A549 (cell line): ENCODE measurements at regions of chr19 and their contacts with region 1.

Region 1: GRCh38 chr19:58305065-58305931 is at the start of gene ERVK3-1:
- DNase-seq: peak; percentile 99
- ATAC-seq: peak; percentile 100
- H3K4me3 ChIP-seq: peak within 1 kb of the TSS; percentile 72
- H3K27ac ChIP-seq: peak within 1 kb of the TSS; percentile 77 to 89
- H3K4me1 ChIP-seq: 0 out of 3 replicates have a peak, but pooled peaks cover 4% of the 10 kb centered on the region
- CTCF ChIP-seq: no peak
- EP300 ChIP-seq: no peak
- POLR2A ChIP-seq: peak; percentile 97
- RAD21 ChIP-seq: 0 out of 5 replicates have a peak, but pooled peaks of 1 of the 2 experiments have one; percentile 20
- polyA plus RNA-seq, gene ERVK3-1: 112 and 142 TPM in 2 replicates

Region 2: DNA sequence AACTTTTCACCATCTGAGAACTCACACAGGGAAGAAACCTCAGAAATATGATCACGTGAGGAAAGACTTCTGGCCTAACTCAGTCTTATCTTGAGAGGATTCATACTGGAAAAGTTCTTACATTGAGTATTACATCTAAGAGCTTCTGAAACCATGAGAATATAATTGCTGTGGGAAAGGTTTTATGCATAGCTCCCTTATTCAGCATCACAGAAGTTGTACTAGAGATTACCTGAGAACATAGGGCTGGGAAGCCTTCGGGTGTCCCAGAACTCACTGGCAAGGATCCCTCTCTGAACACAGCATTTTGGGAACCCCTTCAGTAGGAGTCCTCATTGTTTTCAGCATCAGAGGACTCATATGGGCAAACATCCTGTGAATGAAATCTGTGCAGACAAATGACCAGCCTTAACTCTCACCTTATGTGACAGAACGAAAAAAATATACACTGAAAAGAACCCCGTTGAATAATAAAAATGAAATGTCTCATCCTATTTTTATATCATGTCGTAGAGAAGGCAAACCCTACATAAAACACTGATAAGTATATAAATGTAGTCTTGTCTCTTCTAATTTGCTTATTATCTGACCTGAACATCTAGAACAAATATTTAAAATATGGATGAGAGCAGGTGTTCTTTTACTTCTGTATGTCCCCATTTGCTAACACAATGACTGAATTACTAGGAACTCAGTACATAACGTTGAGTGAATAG is 108.2 kb before region 1 on chr19:
- CTCF ChIA-PET with region 1: no interaction called
- POLR2A ChIA-PET with region 1: no interaction called
- DNase-seq: peak in 1 of 2 experiments; percentile 62
- ATAC-seq: no peak
- H3K4me3 ChIP-seq: no peak overlapping the region
- H3K27ac ChIP-seq: no peak overlapping the region
- H3K4me1 ChIP-seq: no peaks in the 10 kb centered on the region
- CTCF ChIP-seq: no peak
- EP300 ChIP-seq: no peak
- POLR2A ChIP-seq: no peak
- RAD21 ChIP-seq: no peak

Region 3: DNA sequence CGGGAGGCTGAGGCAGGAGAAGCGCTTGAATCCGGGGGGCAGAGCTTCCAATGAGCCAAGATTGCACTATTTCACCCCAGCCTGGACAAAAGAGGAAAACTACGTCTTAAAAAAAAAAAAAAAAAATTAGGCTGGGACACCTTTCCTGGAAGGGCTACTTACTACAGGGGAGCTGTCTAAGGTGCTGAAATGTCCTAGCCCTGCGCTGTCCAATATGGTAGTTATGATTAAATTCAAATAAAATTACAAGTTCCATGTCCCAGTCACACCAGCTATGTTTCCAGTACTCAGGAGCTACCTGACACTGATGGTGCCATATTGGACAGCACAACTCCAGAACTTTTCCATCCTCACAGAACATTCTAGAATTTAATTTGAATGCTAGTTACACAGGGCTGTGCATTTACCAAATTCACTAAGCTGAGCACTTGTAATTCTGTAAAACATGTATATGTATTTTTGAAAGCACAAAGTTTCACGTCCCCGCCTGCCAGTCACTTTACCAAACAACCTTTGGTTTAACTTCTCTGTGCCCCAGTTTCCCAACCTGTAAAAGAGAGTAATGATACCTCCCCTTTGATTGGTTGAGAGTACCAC is 12.3 kb after region 1 on chr19:
- CTCF ChIA-PET with region 1: interaction called, 4 read pairs
- POLR2A ChIA-PET with region 1: interaction called, 11 read pairs
- DNase-seq: peak in 1 of 2 experiments; percentile 51
- ATAC-seq: peak; percentile 40 to 58; a peak in 4 of 6 replicates
- H3K4me3 ChIP-seq: no peak overlapping the region
- H3K27ac ChIP-seq: no peak overlapping the region
- H3K4me1 ChIP-seq: no peaks in the 10 kb centered on the region
- CTCF ChIP-seq: no peak
- EP300 ChIP-seq: no peak
- POLR2A ChIP-seq: no peak
- RAD21 ChIP-seq: no peak

Region 4: GRCh38 chr19:58326914-58327726 is 21.8 kb after region 1 on chr19 and contains the start of gene ZSCAN22:
- CTCF ChIA-PET with region 1: interaction called, 4 read pairs
- POLR2A ChIA-PET with region 1: interaction called, 17 read pairs
- DNase-seq: peak; percentile 99
- ATAC-seq: peak; percentile 96 to 97
- H3K4me3 ChIP-seq: peak within 1 kb of the TSS; percentile 69
- H3K27ac ChIP-seq: peak within 1 kb of the TSS; percentile 88 to 95
- H3K4me1 ChIP-seq: peaks cover 13% of the 10 kb centered on the region; the same call in 2 of the 3 replicates
- CTCF ChIP-seq: no peak
- EP300 ChIP-seq: no peak
- POLR2A ChIP-seq: peak; percentile 59
- RAD21 ChIP-seq: peak in 1 of 2 experiments; percentile 40; a peak in 1 of 5 replicates
- polyA plus RNA-seq, gene ZSCAN22: 4.4 and 5.3 TPM in 2 replicates

Region 5: DNA sequence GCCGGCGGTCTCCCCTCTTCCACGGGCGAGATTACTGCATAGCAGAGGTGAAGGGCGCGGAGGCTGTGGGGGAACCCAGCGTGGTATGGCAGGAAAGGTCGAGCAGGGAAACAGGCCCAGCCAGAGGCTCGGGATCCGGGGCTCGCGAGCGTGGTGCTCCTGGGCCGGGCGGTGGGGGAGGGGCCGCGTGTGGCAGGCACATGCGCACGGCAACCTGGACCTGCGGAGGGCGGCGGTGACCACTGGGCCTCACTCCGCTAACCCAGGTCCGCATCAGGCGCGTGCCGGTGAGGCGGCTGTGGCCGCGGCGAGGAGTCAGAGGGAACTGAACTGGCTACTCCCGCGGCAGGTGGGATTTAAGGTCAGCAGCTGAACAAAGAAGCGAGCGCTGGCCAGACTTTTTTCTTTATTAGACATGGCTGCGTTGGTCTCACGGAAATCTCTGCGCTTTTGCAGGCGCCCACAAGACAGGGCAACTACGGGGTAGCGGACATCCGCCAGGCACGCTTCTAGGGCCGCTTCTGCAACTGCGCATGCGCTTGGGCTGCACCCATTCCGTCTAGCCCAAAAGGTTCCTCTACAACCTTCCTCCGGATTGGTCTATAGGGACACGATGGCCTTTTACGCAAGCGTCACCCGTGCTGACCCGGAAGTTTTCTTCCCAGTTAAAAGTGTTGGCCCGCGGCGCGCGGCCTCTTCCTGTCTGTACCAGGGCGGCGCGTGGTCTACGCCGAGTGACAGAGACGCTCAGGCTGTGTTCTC is 81.5 kb after region 1 on chr19 and contains the start of gene RPS5:
- CTCF ChIA-PET with region 1: no interaction called
- POLR2A ChIA-PET with region 1: no interaction called
- DNase-seq: peak; percentile 99 to 100
- ATAC-seq: peak; percentile 82 to 91
- H3K4me3 ChIP-seq: peak within 1 kb of the TSS; percentile 81
- H3K27ac ChIP-seq: peak within 1 kb of the TSS; percentile 99
- H3K4me1 ChIP-seq: peaks cover 45% of the 10 kb centered on the region
- CTCF ChIP-seq: no peak
- EP300 ChIP-seq: no peak
- POLR2A ChIP-seq: peak; percentile 85
- RAD21 ChIP-seq: no peak; a peak in 1 of 5 replicates
- polyA plus RNA-seq, gene RPS5: 2,475 and 2,940 TPM in 2 replicates